ENCODE measurements at regions of chr12 and their contacts with region 1.

Region 1: DNA sequence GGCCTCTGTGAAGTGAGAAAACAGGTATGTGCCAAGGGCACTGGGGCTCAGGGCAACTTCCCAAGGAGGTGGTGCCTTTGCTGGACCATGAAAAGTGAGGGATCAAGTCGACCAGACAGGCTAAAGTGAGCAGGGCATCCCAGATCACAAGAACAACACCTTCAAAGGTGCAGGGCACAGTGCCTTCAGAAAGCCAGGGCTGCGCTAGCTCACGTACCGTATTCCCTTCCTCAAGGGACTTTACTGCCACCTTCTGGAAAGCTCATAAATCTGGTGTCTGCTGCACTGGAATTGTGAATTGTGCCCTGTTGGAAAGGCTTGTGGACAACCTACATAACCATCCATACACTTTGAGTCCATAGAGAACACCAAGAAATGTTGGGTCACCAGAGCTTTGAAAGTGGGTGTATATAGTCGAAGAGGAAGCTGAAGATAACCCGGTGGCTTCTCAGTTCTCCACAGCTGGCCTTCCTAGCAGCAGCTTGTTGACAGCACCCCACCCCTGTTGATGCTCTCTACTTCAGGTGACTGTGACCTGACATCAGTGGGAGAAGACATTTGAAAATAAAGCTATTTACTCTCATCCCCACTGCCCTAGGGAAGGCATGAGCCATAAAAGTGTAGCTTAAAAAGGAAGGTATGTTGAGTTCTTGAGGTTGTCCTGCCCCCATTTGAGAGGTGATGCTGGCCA is 24.5 kb downstream of the FIGNL2 start:
- DNase-seq: peak in 3 of 5 donors; percentile 23 to 29 (median 26)
- H3K4me3 ChIP-seq: no peak overlapping the region
- H3K4me3 Mint-ChIP-seq: peak overlapping the region in 5 of 8 donors; percentile 1 to 71 (median 43)
- H3K27ac ChIP-seq: no peak overlapping the region
- H3K27ac Mint-ChIP-seq: peak overlapping the region in 5 of 7 donors; percentile 42 to 80 (median 59)
- H3K4me1 ChIP-seq: peaks cover 19% of the 10 kb centered on the region
- H3K4me1 Mint-ChIP-seq: peaks cover 17 to 34% (median 22%) of the 10 kb centered on the region in 4 donors
- H3K27me3 ChIP-seq: no peaks in the 10 kb centered on the region
- H3K27me3 Mint-ChIP-seq: no peaks in the 10 kb centered on the region

Region 2: GRCh38 chr12:51424662-51425438 is 399.2 kb before region 1 on chr12 and contains the start of gene SLC4A8:
- CTCF ChIA-PET with region 1: interaction called, 9 read pairs
- POLR2A ChIA-PET with region 1: no interaction called
- intact Hi-C with region 1: loop called (anchors 2 kb)
- DNase-seq: peak; percentile 62 to 74 (median 66)
- H3K4me3 ChIP-seq: peak within 1 kb of the TSS; percentile 4 to 51
- H3K4me3 Mint-ChIP-seq: peak within 1 kb of the TSS; percentile 80 to 88 (median 86)
- H3K27ac ChIP-seq: peak within 1 kb of the TSS; percentile 8
- H3K27ac Mint-ChIP-seq: peak within 1 kb of the TSS in 5 of 7 donors; percentile 72 to 88 (median 85)
- H3K4me1 ChIP-seq: peaks cover 6% of the 10 kb centered on the region
- H3K4me1 Mint-ChIP-seq: peaks cover 9 to 10% (median 10%) of the 10 kb centered on the region in 4 donors
- H3K27me3 ChIP-seq: no peaks in the 10 kb centered on the region
- H3K27me3 Mint-ChIP-seq: no peaks in the 10 kb centered on the region
- total RNA-seq, gene SLC4A8: 0.47 to 0.69 TPM

Region 3: DNA sequence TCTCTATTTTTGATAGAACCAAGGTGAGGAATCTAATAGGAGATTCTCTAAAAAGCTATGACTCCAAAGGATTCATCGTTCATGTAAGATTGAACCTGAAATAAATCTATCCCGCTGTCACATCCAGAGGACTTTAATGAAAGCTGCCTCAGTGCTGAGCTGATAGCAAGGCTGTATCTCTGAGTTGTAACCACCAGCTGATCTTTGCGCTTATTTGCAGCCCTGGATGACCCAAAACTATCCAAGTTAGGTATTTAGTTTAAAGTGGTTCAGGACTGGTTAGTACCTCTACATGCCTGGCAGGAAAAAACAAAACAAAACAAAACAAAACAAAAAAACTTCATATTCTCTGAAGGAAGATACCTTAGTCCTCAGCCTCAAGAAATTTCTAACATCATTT is 55.1 kb after region 1 on chr12:
- CTCF ChIA-PET with region 1: interaction called, 4 read pairs
- POLR2A ChIA-PET with region 1: no interaction called
- intact Hi-C with region 1: loop called (anchors 5 kb)
- DNase-seq: no peak
- H3K4me3 ChIP-seq: no peak overlapping the region
- H3K4me3 Mint-ChIP-seq: no peak overlapping the region
- H3K27ac ChIP-seq: no peak overlapping the region
- H3K27ac Mint-ChIP-seq: no peak overlapping the region
- H3K4me1 ChIP-seq: no peaks in the 10 kb centered on the region
- H3K4me1 Mint-ChIP-seq: no peaks in the 10 kb centered on the region
- H3K27me3 ChIP-seq: no peaks in the 10 kb centered on the region
- H3K27me3 Mint-ChIP-seq: peaks cover 3 to 9% of the 10 kb centered on the region in 2 donors

Region 4: GRCh38 chr12:51893786-51894185 is 69.8 kb after region 1 on chr12:
- CTCF ChIA-PET with region 1: no interaction called
- POLR2A ChIA-PET with region 1: no interaction called
- intact Hi-C with region 1: no loop called
- DNase-seq: no peak
- H3K4me3 ChIP-seq: no peak overlapping the region
- H3K4me3 Mint-ChIP-seq: no peak overlapping the region
- H3K27ac ChIP-seq: no peak overlapping the region
- H3K27ac Mint-ChIP-seq: no peak overlapping the region
- H3K4me1 ChIP-seq: no peaks in the 10 kb centered on the region
- H3K4me1 Mint-ChIP-seq: no peaks in the 10 kb centered on the region
- H3K27me3 ChIP-seq: no peaks in the 10 kb centered on the region
- H3K27me3 Mint-ChIP-seq: peaks cover 2 to 21% of the 10 kb centered on the region in 2 donors

Region 5: DNA sequence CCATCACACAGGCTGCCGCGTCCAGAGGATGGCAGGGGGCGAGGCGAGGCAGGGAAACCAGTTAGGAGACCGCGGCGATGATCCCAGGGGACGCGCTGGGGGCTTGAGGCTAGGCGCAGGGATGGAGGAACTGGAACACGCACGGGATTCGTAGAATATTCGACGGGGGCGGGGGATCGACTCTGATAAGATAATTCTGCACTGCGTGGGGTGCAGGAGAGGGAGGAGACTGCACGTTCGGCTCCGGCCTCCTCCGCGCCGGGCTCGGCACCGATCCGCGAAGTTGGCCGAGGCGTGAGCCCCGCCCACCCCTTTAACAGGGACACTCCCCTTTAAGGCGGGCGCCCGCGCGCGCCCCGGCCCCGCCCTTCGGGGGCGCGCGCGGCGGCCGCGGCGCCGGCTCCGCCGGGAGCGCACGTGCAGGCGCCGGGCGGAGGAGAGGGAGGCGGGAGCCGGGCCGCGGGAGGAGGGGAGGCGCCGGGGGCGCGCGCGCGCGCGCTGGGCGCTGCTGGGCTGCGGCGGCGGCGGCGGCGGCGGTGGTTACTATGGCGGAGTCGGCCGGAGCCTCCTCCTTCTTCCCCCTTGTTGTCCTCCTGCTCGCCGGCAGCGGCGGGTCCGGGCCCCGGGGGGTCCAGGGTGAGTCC is 127.3 kb after region 1 on chr12 and contains the start of gene ACVR1B:
- CTCF ChIA-PET with region 1: no interaction called
- POLR2A ChIA-PET with region 1: interaction called, 3 read pairs
- intact Hi-C with region 1: loop called (anchors 1 kb)
- DNase-seq: peak; percentile 88 to 92 (median 89)
- H3K4me3 ChIP-seq: peak within 1 kb of the TSS; percentile 61 to 83
- H3K4me3 Mint-ChIP-seq: peak within 1 kb of the TSS; percentile 87 to 98 (median 95)
- H3K27ac ChIP-seq: peak within 1 kb of the TSS; percentile 63
- H3K27ac Mint-ChIP-seq: peak within 1 kb of the TSS; percentile 49 to 97 (median 95)
- H3K4me1 ChIP-seq: peaks cover 30% of the 10 kb centered on the region
- H3K4me1 Mint-ChIP-seq: peaks cover 29 to 52% (median 40%) of the 10 kb centered on the region in 4 donors
- H3K27me3 ChIP-seq: no peaks in the 10 kb centered on the region
- H3K27me3 Mint-ChIP-seq: peaks cover 0 to 2% of the 10 kb centered on the region in 2 donors
- total RNA-seq, gene ACVR1B: 10.8 to 12.6 TPM

Region 6: DNA sequence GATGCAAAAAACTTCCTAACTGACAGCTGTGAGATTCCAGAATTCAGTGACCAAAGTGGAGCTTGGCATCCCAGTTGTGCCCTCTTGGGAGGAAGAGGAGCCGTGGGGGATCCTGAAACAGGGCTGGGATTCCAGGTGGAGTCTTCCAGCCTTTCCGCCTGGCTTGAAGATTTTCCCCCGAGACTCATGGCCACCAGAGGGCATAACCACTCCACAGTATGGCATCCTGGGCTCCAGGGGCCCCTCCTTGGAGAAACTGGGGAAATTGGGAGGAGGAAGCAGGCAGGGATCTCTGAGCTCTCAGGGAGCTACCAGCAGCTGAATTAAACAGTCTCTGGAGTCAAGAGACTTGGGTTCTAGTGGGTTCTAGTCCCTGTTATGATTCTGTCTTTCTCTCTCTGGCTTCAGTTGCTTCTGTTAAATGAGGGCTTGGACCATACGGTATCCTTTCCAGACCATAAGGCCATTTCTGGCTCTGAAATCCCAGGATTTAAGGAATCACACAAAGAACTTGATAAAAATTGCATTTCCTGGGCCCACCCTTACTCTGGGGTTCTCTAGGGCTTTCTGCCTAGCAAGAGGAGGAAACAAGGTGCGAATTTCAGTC is 180.1 kb after region 1 on chr12:
- CTCF ChIA-PET with region 1: no interaction called
- POLR2A ChIA-PET with region 1: no interaction called
- intact Hi-C with region 1: no loop called
- DNase-seq: no peak
- H3K4me3 ChIP-seq: no peak overlapping the region
- H3K4me3 Mint-ChIP-seq: no peak overlapping the region
- H3K27ac ChIP-seq: no peak overlapping the region
- H3K27ac Mint-ChIP-seq: peak overlapping the region in 2 of 7 donors; percentile 23 to 27
- H3K4me1 ChIP-seq: peaks cover 24% of the 10 kb centered on the region
- H3K4me1 Mint-ChIP-seq: peaks cover 12 to 35% (median 22%) of the 10 kb centered on the region in 4 donors
- H3K27me3 ChIP-seq: no peaks in the 10 kb centered on the region
- H3K27me3 Mint-ChIP-seq: peaks cover 0 to 2% of the 10 kb centered on the region in 2 donors